Lower leg skin (tissue), 4 donors: ENCODE measurements at regions of chr1 and their contacts with region 1.

Region 1: GRCh38 chr1:20493839-20494608 is 8.0 kb upstream of the CAMK2N1 start:
- DNase-seq: peak; percentile 89 to 98
- H3K4me3 ChIP-seq: no peak overlapping the region
- CTCF ChIP-seq: peak in 1 of 3 donors; percentile 92
- POLR2A ChIP-seq: no peak

Region 2: GRCh38 chr1:19918057-19918456 is 576.0 kb before region 1 on chr1:
- intact Hi-C with region 1: loop called (anchors 10 kb)
- DNase-seq: peak; percentile 76 to 96
- H3K4me3 ChIP-seq: no peak overlapping the region
- CTCF ChIP-seq: peak in 1 of 3 donors; percentile 72
- POLR2A ChIP-seq: no peak

Region 3: DNA sequence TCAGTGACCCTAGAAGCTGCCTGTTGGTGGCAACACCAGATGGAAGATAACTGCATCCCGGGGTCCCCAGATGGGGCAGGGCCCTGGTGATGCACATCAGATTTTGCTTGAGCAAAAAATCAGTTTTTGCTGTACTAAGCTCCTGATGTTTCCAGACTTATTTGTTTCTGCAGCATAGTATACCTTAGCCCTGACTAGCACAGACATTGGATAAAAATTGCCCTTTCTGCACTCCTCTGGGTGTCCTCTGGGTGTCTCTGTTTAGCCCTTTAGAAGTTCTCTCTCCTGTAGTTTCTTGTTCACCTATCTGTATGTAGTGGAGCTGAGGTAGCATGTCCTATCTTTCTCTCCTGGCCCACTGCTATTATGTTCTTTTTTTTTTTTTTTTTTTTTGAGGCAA is 277.4 kb before region 1 on chr1:
- intact Hi-C with region 1: loop called (anchors 5 kb)
- DNase-seq: no peak
- H3K4me3 ChIP-seq: no peak overlapping the region
- CTCF ChIP-seq: no peak
- POLR2A ChIP-seq: no peak

Region 4: GRCh38 chr1:20891091-20891490 is 397.1 kb after region 1 on chr1:
- intact Hi-C with region 1: no loop called
- DNase-seq: no peak
- H3K4me3 ChIP-seq: no peak overlapping the region
- CTCF ChIP-seq: no peak
- POLR2A ChIP-seq: no peak